Sigmoid colon (tissue), 7 donors: ENCODE measurements at regions of chr19 and their contacts with region 1.

Region 1: GRCh38 chr19:10653715-10654492 is at the start of gene ILF3:
- DNase-seq: peak; percentile 100
- H3K4me3 ChIP-seq: peak within 1 kb of the TSS; percentile 72 to 100 (median 100)
- H3K27ac ChIP-seq: peak within 1 kb of the TSS; percentile 95 to 100 (median 100)
- H3K4me1 ChIP-seq: peaks cover 0 to 51% (median 44%) of the 10 kb centered on the region in 4 donors
- H3K27me3 ChIP-seq: no peaks in the 10 kb centered on the region
- CTCF ChIP-seq: no peak
- EP300 ChIP-seq: peak in 2 of 4 donors; percentile 55 to 94
- POLR2A ChIP-seq: peak; percentile 98 to 99
- total RNA-seq, gene ILF3: 83.5 to 109 (median 94.8) TPM

Region 2: DNA sequence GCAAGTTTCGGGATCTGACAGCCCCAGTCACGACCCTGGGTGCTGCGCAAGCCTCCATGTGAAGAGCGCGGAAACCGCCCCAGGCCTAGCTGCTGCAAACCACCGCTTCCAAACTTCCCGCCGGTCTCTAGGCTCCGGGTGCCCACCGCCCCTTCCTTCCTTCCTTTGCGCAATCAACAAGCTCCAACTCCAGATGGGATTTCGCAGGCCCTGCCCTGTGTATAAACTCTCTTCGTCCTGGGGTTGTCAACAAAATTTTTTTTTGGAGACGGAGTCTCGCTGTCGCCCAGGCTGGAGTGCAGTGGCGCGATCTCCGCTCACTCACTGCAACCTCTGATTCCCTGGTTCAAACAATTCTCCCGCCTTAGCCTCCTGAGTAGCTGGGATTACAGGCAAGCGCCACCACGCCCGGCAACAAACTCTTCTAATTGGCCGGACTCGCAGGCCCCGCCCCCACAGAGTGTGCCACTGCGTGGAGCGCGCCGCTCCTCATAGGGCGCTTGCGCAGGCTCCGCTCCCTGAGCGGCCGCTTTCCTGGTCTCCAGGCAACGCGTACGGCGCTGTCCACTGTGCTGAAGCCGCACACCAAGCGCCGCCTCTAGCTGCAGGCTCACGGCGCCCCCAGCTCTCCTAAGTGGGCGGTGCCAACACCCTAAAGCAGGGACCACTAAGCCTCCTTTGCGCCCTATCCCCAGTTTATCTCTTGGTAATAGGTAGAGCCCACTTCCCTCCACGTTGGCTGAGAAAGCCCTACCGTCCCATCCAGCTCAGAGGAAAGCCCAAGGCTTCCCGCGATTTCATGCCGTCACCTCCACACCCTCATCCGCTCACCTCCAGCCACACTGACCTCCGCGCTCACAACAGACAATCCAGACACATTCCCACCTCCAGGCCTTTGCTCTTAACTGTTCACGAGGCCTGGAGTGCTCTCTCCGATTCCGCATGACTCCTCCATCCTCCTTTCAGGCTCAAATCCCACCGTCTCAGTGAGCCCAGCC is 41.8 kb after region 1 on chr19:
- intact Hi-C with region 1: loop called (anchors 5 kb)
- DNase-seq: peak; percentile 89
- H3K4me3 ChIP-seq: peak overlapping the region in 2 of 4 donors; percentile 14 to 25
- H3K27ac ChIP-seq: no peak overlapping the region
- H3K4me1 ChIP-seq: peaks cover 0 to 14% (median 12%) of the 10 kb centered on the region in 4 donors
- H3K27me3 ChIP-seq: no peaks in the 10 kb centered on the region
- CTCF ChIP-seq: no peak
- EP300 ChIP-seq: no peak
- POLR2A ChIP-seq: no peak